Mammary epithelial cell (primary cell): ENCODE measurements at regions of chrX and their contacts with region 1.

Region 1: DNA sequence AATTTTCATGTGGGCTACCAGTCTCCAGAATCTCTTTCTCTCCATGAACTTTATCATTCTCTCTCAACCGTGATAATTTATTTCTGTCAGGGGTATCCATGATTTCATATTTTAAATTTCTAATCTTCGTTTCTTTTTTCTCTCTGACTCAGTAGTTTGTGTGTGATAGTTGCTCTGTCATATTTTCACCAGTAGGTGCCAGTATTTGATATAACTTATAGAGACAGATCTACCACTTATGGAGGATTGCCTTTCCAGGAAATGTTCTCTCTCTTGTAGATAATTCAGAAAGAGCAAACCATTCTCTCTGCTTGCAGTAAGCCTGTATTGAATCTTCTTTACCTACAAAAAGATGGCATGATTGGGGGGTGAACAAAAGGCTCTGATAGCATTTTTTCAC is 79.3 kb upstream of the DYNLT3 start:
- DNase-seq: no peak
- H3K4me3 ChIP-seq: no peak overlapping the region
- H3K27ac ChIP-seq: no peak overlapping the region
- H3K4me1 ChIP-seq: peaks cover 3% of the 10 kb centered on the region
- H3K27me3 ChIP-seq: peaks cover 6% of the 10 kb centered on the region
- CTCF ChIP-seq: peak; percentile 44 to 61

Region 2: GRCh38 chrX:37745354-37745753 is 181.3 kb before region 1 on chrX:
- CTCF ChIA-PET with region 1: no interaction called
- dilution Hi-C with region 1: no loop called
- in situ Hi-C with region 1: no loop called
- intact Hi-C with region 1: loop called (anchors 1 kb)
- DNase-seq: peak; percentile 51
- H3K4me3 ChIP-seq: no peak overlapping the region
- H3K27ac ChIP-seq: no peak overlapping the region
- H3K4me1 ChIP-seq: no peaks in the 10 kb centered on the region
- H3K27me3 ChIP-seq: no peaks in the 10 kb centered on the region
- CTCF ChIP-seq: peak; percentile 90 to 94

Region 3: GRCh38 chrX:37846934-37847732 is 79.6 kb before region 1 on chrX and contains the start of gene DYNLT3:
- CTCF ChIA-PET with region 1: no interaction called
- dilution Hi-C with region 1: no loop called
- in situ Hi-C with region 1: no loop called
- intact Hi-C with region 1: loop called (anchors 5 kb)
- DNase-seq: peak; percentile 77
- H3K4me3 ChIP-seq: peak within 1 kb of the TSS; percentile 51 to 74 (median 66)
- H3K27ac ChIP-seq: peak within 1 kb of the TSS; percentile 79
- H3K4me1 ChIP-seq: no peaks in the 10 kb centered on the region
- H3K27me3 ChIP-seq: no peaks in the 10 kb centered on the region
- CTCF ChIP-seq: no peak
- total RNA-seq, gene DYNLT3: 36.8 to 47.3 TPM

Region 4: DNA sequence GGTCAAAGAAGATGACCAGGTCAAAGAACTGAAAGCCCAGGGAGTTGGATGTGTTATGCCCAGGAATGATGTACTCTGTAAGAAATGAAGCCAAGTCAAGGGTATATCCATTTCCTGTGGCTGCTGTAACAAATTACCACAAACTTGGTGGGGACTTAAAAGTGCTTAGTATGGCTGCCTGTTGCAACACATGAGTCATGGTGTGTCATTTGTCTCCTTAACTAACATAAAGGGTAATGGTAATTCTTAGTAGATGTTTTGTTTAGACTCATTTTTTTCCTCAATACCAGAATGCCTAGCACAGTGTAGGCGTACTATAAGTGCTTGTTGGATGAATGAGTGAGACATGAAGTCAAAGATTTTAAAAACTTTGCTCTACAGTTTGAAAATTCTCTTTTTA is 125.4 kb after region 1 on chrX:
- CTCF ChIA-PET with region 1: no interaction called
- dilution Hi-C with region 1: no loop called
- in situ Hi-C with region 1: no loop called
- intact Hi-C with region 1: no loop called
- DNase-seq: peak; percentile 86
- H3K4me3 ChIP-seq: no peak overlapping the region
- H3K27ac ChIP-seq: no peak overlapping the region
- H3K4me1 ChIP-seq: peaks cover 14% of the 10 kb centered on the region
- H3K27me3 ChIP-seq: no peaks in the 10 kb centered on the region
- CTCF ChIP-seq: no peak

Region 5: GRCh38 chrX:38166478-38167083 is 239.9 kb after region 1 on chrX:
- CTCF ChIA-PET with region 1: no interaction called
- dilution Hi-C with region 1: no loop called
- in situ Hi-C with region 1: loop called (anchors 10 kb)
- intact Hi-C with region 1: loop called (anchors 1 kb)
- DNase-seq: no peak
- H3K4me3 ChIP-seq: no peak overlapping the region
- H3K27ac ChIP-seq: no peak overlapping the region
- H3K4me1 ChIP-seq: no peaks in the 10 kb centered on the region
- H3K27me3 ChIP-seq: no peaks in the 10 kb centered on the region
- CTCF ChIP-seq: peak; percentile 53 to 65